ENCODE measurements at regions of chr6 and their contacts with region 1.

Region 1: GRCh38 chr6:121851056-121851455 is 415.6 kb downstream of the GJA1 start:
- DNase-seq: peak; percentile 58 to 59
- H3K4me3 ChIP-seq: no peak overlapping the region
- H3K27ac ChIP-seq: peak overlapping the region; percentile 84 to 94 (median 88)
- H3K4me1 ChIP-seq: peaks cover 37 to 38% of the 10 kb centered on the region in 2 donors
- H3K27me3 ChIP-seq: no peaks in the 10 kb centered on the region
- CTCF ChIP-seq: no peak
- POLR2A ChIP-seq: peak in 1 of 2 donors; percentile 63

Region 2: DNA sequence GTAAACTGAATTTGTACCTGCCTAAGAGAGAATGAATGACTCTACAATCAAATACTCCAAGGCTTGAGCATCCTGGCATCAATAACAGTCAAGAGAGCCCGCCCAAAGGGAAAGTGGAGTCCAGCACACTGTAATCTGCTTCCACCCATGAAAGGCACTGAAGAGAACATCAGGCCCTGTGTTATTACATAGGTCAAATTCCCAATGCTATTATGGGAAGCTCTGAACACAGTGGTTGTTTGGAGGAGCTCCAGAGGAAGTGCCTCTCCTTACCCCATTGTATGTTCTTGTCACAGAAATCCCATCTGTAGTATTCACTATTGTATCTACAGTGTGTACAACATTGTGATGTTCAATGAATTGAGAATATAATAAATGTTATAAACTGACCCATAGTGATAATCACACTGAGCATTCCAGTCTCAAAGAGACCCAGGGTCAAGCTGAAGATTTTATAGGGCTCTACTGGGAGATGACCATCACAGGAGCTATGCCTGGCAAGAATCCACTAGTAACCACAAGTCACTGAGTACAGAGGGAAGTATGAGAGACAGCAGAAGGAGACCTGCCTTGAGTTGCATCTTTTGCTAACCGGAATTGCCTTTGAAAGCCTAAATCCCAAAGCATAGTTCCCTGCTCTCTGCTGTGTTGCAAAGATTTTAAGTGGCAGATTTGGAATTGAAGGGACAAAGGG is 31.1 kb after region 1 on chr6:
- intact Hi-C with region 1: no loop called
- DNase-seq: no peak
- H3K4me3 ChIP-seq: no peak overlapping the region
- H3K27ac ChIP-seq: no peak overlapping the region
- H3K4me1 ChIP-seq: peaks cover 6 to 9% of the 10 kb centered on the region in 2 donors
- H3K27me3 ChIP-seq: no peaks in the 10 kb centered on the region
- CTCF ChIP-seq: no peak
- POLR2A ChIP-seq: no peak

Region 3: DNA sequence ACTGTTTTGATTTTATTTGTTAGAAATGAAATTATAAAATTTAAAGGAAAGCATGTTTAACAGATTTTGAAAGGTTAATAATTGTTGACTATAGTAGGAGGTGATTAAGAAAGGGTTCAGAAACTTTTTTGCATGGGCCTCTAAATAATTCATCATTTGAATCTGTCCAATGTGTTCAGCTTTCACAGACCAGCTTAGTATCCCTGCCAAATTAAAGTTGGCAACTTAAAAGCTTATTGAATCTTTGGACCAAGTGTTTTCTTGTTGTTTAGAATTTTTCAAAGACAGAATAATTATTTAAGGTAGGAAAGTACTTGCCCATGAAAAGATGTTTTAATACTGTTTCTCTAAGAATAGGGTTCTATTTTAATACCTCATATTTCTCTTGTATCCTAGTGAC is 50.4 kb after region 1 on chr6:
- intact Hi-C with region 1: no loop called
- DNase-seq: no peak
- H3K4me3 ChIP-seq: no peak overlapping the region
- H3K27ac ChIP-seq: no peak overlapping the region
- H3K4me1 ChIP-seq: peaks cover 0 to 17% of the 10 kb centered on the region in 2 donors
- H3K27me3 ChIP-seq: no peaks in the 10 kb centered on the region
- CTCF ChIP-seq: no peak
- POLR2A ChIP-seq: no peak

Region 4: DNA sequence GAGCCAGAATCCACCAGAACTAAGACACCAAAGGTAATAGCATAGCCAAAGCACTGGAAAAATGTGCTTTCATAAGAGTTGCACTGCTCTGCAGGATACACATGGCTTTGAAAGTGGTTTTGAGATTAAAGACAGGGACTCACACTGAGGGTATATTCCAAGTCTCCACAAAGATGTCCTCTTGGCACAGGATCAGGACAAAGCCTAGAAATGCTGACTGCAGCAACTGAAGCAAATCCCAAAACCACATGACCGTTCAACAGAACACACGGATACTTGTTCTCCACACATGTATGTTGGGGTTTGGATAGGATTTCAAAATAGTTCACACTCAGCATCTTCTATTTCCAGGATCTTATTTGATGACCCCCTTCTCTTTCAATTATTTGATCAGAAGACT is 184.1 kb after region 1 on chr6:
- intact Hi-C with region 1: loop called (anchors 5 kb)
- DNase-seq: no peak
- H3K4me3 ChIP-seq: no peak overlapping the region
- H3K27ac ChIP-seq: no peak overlapping the region
- H3K4me1 ChIP-seq: peaks cover 5% of the 10 kb centered on the region in 2 donors
- H3K27me3 ChIP-seq: no peaks in the 10 kb centered on the region
- CTCF ChIP-seq: no peak
- POLR2A ChIP-seq: no peak

Region 5: DNA sequence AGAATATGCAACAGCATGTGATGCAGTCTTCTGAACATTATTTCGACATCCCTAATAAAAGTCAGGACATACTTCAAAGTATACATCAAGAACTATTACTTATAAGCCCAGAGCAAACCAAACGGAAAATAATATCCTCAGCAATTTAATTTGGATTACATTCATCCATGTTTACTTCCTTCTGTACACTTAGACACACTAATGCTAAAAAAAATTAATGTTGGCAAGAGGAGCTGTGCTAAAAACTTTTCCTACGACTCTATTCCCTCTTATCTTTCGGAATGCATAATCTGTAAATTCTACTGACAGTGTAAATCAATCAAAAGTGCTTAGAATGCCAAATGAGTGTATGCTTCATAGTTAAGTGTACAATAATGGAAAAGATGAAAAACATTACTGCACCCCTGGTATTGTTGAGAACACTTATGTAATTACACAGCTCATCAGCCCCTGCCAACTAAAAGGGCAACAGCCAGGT is 247.2 kb after region 1 on chr6:
- intact Hi-C with region 1: no loop called
- DNase-seq: no peak
- H3K4me3 ChIP-seq: no peak overlapping the region
- H3K27ac ChIP-seq: no peak overlapping the region
- H3K4me1 ChIP-seq: no peaks in the 10 kb centered on the region
- H3K27me3 ChIP-seq: no peaks in the 10 kb centered on the region
- CTCF ChIP-seq: no peak
- POLR2A ChIP-seq: no peak

Measured in thyroid gland (tissue), 4 donors.